ENCODE measurements at regions of chr6 and their contacts with region 1.

Region 1: DNA sequence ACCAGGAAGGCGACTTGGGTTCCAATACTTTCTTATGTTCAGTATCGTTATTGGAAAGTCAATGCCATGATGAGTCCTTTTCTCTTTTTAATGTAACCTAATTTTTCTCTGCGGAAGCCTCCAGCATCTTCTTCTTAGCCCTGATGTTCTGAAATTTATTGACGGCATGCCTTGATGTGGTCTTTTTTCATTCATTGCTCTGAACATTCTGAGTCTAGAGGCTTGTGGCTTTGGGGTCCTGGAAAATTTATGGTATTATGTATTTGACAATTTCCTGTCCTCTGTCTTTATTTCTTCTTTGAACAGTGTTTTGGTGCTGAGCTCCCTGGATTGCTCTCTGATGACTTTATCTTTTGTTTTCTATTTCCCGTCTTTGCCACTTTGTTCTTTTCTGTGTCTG is 28.7 kb upstream of the MAS1 start:
- DNase-seq: no peak
- ATAC-seq: no peak
- H3K4me3 ChIP-seq: no peak overlapping the region
- H3K27ac ChIP-seq: no peak overlapping the region
- H3K4me1 ChIP-seq: no peaks in the 10 kb centered on the region
- H3K27me3 ChIP-seq: 0 out of 2 replicates have a peak, but pooled peaks cover 2% of the 10 kb centered on the region
- CTCF ChIP-seq: no peak

Region 2: GRCh38 chr6:159941286-159942113 is 79.4 kb after region 1 on chr6:
- CTCF ChIA-PET with region 1: no interaction called
- POLR2A ChIA-PET with region 1: no interaction called
- in situ Hi-C with region 1: no loop called
- intact Hi-C with region 1: loop called (anchors 1 kb)
- DNase-seq: peak; percentile 27
- ATAC-seq: peak; percentile 92
- H3K4me3 ChIP-seq: no peak overlapping the region
- H3K27ac ChIP-seq: no peak overlapping the region
- H3K4me1 ChIP-seq: no peaks in the 10 kb centered on the region
- H3K27me3 ChIP-seq: no peaks in the 10 kb centered on the region
- CTCF ChIP-seq: peak; percentile 65

Region 3: GRCh38 chr6:160102956-160103824 is 241.1 kb after region 1 on chr6:
- CTCF ChIA-PET with region 1: interaction called, 3 read pairs
- POLR2A ChIA-PET with region 1: no interaction called
- in situ Hi-C with region 1: no loop called
- intact Hi-C with region 1: loop called (anchors 10 kb)
- DNase-seq: no peak
- ATAC-seq: 0 out of 2 replicates have a peak, but pooled peaks have one; percentile 37
- H3K4me3 ChIP-seq: no peak overlapping the region
- H3K27ac ChIP-seq: no peak overlapping the region
- H3K4me1 ChIP-seq: no peaks in the 10 kb centered on the region
- H3K27me3 ChIP-seq: no peaks in the 10 kb centered on the region
- CTCF ChIP-seq: peak; percentile 75